CD4-positive, alpha-beta memory T cell (primary cell): ENCODE measurements at regions of chr1 and their contacts with region 1.

Region 1: DNA sequence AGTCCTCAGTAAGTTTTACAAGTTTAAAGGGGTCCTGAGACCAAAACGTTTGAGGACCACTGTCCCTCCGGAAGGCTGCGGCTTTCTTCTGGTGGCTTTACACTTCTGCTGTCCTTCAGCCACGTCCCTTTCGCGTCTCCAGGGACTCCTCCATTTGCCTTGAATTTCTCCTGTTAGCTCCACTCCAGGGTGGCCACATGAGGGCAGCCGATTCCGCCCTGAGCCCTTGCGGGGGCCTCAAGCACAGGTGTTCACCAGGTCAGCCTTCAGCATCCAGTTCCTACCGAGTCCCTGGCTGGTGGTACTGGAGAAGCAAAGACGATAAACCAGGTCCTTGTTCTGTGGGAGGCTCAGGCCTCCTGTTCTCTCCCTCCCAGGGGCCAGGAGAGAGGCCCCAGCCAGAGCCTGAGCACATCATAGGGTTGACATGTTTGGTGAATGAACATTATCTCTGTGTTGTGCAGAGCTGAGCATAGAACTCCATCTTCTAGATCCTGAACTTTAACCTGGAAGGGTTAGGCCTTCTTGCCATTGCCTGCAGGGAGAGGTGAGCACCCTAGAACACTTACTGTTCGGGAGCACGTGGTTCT is 27.4 kb upstream of the COQ8A start:
- DNase-seq: peak in 4 of 5 donors; percentile 9 to 14 (median 12)
- H3K4me3 ChIP-seq: no peak overlapping the region
- H3K4me3 Mint-ChIP-seq: no peak overlapping the region
- H3K27ac ChIP-seq: no peak overlapping the region
- H3K27ac Mint-ChIP-seq: no peak overlapping the region
- H3K4me1 ChIP-seq: no peaks in the 10 kb centered on the region
- H3K4me1 Mint-ChIP-seq: no peaks in the 10 kb centered on the region
- H3K27me3 ChIP-seq: no peaks in the 10 kb centered on the region
- H3K27me3 Mint-ChIP-seq: no peaks in the 10 kb centered on the region

Region 2: DNA sequence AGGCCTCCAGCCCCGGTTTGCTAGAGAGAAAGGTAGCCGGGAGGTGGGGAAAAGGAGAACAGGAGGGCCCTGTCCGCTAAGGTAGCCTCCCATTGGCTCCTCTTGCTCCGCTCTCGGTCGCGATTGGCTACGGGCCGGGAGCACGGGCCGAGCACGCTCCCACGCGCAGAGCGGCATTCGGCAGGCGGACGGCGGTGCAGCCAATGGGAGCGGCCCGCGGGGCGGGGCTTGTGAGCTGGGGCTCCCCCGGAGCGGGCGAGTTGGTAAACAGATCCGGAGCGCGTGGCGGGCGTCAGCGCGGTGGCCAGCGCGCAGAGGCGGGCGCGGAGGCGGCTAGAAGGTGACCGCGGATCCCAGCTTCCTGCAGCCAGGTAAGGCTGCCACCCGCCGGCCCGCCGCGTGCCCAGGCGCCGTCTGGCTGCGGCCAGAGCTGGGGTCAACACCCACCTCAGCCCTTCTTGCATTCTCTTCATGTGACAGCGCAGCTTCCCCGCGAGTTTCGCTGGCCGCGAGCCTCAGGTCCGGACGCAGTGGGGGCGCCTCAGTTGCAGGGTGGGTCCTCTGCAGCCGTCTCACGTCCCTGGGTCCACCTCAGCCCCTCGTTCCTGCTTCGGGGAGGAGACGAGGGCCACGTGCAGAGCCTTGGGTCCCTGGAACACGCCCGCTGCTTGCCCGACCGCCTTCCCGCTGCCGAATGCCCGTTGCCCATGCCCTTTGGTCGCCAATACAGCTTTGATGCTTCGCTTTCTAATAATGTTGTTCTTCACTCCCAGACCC is 27.5 kb after region 1 on chr1 and contains the start of gene COQ8A:
- CTCF ChIA-PET with region 1: interaction called, 6 read pairs
- POLR2A ChIA-PET with region 1: interaction called, 18 read pairs
- intact Hi-C with region 1: no loop called
- DNase-seq: peak; percentile 98 to 100 (median 99)
- H3K4me3 ChIP-seq: peak within 1 kb of the TSS; percentile 75 to 84
- H3K4me3 Mint-ChIP-seq: peak within 1 kb of the TSS; percentile 89 to 95 (median 92)
- H3K27ac ChIP-seq: peak within 1 kb of the TSS; percentile 87
- H3K27ac Mint-ChIP-seq: peak within 1 kb of the TSS; percentile 96 to 98 (median 97)
- H3K4me1 ChIP-seq: peaks cover 40% of the 10 kb centered on the region
- H3K4me1 Mint-ChIP-seq: peaks cover 31 to 67% (median 50%) of the 10 kb centered on the region in 4 donors
- H3K27me3 ChIP-seq: no peaks in the 10 kb centered on the region
- H3K27me3 Mint-ChIP-seq: peaks cover 0 to 2% of the 10 kb centered on the region in 2 donors
- total RNA-seq, gene COQ8A: 69.2 to 70.7 TPM

Region 3: GRCh38 chr1:226973898-226974543 is 61.3 kb after region 1 on chr1:
- CTCF ChIA-PET with region 1: no interaction called
- POLR2A ChIA-PET with region 1: no interaction called
- intact Hi-C with region 1: no loop called
- DNase-seq: no peak
- H3K4me3 ChIP-seq: no peak overlapping the region
- H3K4me3 Mint-ChIP-seq: no peak overlapping the region
- H3K27ac ChIP-seq: no peak overlapping the region
- H3K27ac Mint-ChIP-seq: peak overlapping the region in 2 of 7 donors; percentile 12 to 41
- H3K4me1 ChIP-seq: no peaks in the 10 kb centered on the region
- H3K4me1 Mint-ChIP-seq: peaks cover 0 to 9% (median 3%) of the 10 kb centered on the region in 4 donors
- H3K27me3 ChIP-seq: no peaks in the 10 kb centered on the region
- H3K27me3 Mint-ChIP-seq: no peaks in the 10 kb centered on the region

Region 4: GRCh38 chr1:227542143-227543120 is 629.8 kb after region 1 on chr1:
- CTCF ChIA-PET with region 1: no interaction called
- POLR2A ChIA-PET with region 1: no interaction called
- intact Hi-C with region 1: loop called (anchors 5 kb)
- DNase-seq: peak; percentile 86 to 90 (median 87)
- H3K4me3 ChIP-seq: peak overlapping the region in 1 of 2 donors; percentile 52
- H3K4me3 Mint-ChIP-seq: peak overlapping the region; percentile 59 to 73 (median 70)
- H3K27ac ChIP-seq: no peak overlapping the region
- H3K27ac Mint-ChIP-seq: peak overlapping the region; percentile 17 to 83 (median 57)
- H3K4me1 ChIP-seq: peaks cover 9% of the 10 kb centered on the region
- H3K4me1 Mint-ChIP-seq: peaks cover 3 to 6% (median 4%) of the 10 kb centered on the region in 4 donors
- H3K27me3 ChIP-seq: no peaks in the 10 kb centered on the region
- H3K27me3 Mint-ChIP-seq: peaks cover 0 to 4% of the 10 kb centered on the region in 2 donors